IMR-90 (cell line): ENCODE measurements at regions of chr14 and their contacts with region 1.

Region 1: GRCh38 chr14:79451601-79452000 is 759.7 kb downstream of the DIO2 start:
- DNase-seq: no peak
- ATAC-seq: no peak
- H3K4me3 ChIP-seq: no peak overlapping the region
- H3K27ac ChIP-seq: no peak overlapping the region
- H3K4me1 ChIP-seq: no peaks in the 10 kb centered on the region; the same call in 1 of the 2 replicates
- H3K27me3 ChIP-seq: no peaks in the 10 kb centered on the region
- CTCF ChIP-seq: no peak
- POLR2A ChIP-seq: no peak
- RAD21 ChIP-seq: no peak

Region 2: GRCh38 chr14:79177106-79177505 is 274.5 kb before region 1 on chr14:
- CTCF ChIA-PET with region 1: no interaction called
- POLR2A ChIA-PET with region 1: no interaction called
- dilution Hi-C with region 1: no loop called
- in situ Hi-C with region 1: no loop called
- intact Hi-C with region 1: no loop called
- DNase-seq: no peak
- ATAC-seq: no peak
- H3K4me3 ChIP-seq: no peak overlapping the region
- H3K27ac ChIP-seq: no peak overlapping the region
- H3K4me1 ChIP-seq: no peaks in the 10 kb centered on the region
- H3K27me3 ChIP-seq: peaks cover 2% of the 10 kb centered on the region; the same call in 1 of the 2 replicates
- CTCF ChIP-seq: no peak
- POLR2A ChIP-seq: no peak
- RAD21 ChIP-seq: no peak

Region 3: GRCh38 chr14:80150301-80150700 is 698.7 kb after region 1 on chr14:
- CTCF ChIA-PET with region 1: interaction called, 10 read pairs
- POLR2A ChIA-PET with region 1: no interaction called
- dilution Hi-C with region 1: no loop called
- in situ Hi-C with region 1: no loop called
- intact Hi-C with region 1: no loop called
- DNase-seq: peak; percentile 23
- ATAC-seq: no peak
- H3K4me3 ChIP-seq: no peak overlapping the region
- H3K27ac ChIP-seq: no peak overlapping the region
- H3K4me1 ChIP-seq: no peaks in the 10 kb centered on the region
- H3K27me3 ChIP-seq: no peaks in the 10 kb centered on the region
- CTCF ChIP-seq: no peak
- POLR2A ChIP-seq: no peak
- RAD21 ChIP-seq: no peak